ENCODE measurements at regions of chr11 and their contacts with region 1.

Region 1: DNA sequence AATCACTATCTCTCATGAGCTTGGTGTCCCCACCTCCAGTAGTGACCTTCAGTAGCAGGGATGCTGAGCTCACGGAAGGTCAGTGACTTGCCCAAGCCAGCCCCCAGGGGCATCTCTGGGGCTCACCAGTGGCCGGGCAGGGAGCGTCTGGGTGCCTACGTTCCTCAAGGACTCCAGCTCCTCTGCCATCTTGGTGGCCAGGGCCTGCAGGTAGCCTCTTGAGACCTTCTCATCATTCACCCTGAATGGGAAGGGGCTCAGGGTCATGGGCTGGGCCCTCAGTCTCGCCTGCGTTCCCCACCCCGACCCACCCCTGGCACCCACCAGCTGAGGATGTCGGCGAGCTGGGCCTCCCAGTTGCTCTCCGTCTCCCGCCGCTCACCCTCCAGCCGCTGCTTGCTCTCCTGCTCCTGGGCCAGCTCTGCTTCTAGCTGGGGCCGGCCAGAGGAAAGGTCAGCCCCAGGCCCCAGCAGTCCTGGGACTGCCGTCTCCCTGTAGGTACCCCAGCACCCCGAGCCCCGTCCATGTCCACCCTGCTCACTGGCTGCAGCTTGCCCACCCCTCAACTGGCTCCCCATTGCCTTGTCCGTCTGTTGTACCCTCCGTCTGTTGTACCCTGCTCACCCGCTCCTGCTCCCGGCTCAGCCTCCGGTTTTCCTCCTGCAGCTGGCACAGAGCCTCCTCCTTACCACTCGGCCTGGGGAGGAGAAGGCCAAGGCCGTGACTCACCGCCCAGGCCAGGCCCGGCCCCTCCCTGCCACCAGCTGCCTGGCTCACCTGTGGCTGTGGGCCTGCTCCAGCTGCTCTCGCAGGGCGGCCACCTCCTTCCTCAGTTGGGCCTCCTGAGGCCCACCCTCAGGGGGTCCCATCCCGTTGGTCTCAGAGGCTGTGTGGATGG is 9.5 kb downstream of the CDC42BPG start:
- DNase-seq: peak; percentile 85
- H3K4me3 ChIP-seq: no peak overlapping the region
- H3K27ac ChIP-seq: no peak overlapping the region
- H3K4me1 ChIP-seq: peaks cover 19% of the 10 kb centered on the region
- H3K27me3 ChIP-seq: no peaks in the 10 kb centered on the region
- CTCF ChIP-seq: no peak

Region 2: GRCh38 chr11:64652586-64653387 is 182.2 kb before region 1 on chr11:
- CTCF ChIA-PET with region 1: no interaction called
- dilution Hi-C with region 1: no loop called
- in situ Hi-C with region 1: no loop called
- intact Hi-C with region 1: no loop called
- DNase-seq: peak; percentile 41
- H3K4me3 ChIP-seq: no peak overlapping the region
- H3K27ac ChIP-seq: no peak overlapping the region
- H3K4me1 ChIP-seq: no peaks in the 10 kb centered on the region
- H3K27me3 ChIP-seq: no peaks in the 10 kb centered on the region
- CTCF ChIP-seq: peak; percentile 91 to 93

Region 3: DNA sequence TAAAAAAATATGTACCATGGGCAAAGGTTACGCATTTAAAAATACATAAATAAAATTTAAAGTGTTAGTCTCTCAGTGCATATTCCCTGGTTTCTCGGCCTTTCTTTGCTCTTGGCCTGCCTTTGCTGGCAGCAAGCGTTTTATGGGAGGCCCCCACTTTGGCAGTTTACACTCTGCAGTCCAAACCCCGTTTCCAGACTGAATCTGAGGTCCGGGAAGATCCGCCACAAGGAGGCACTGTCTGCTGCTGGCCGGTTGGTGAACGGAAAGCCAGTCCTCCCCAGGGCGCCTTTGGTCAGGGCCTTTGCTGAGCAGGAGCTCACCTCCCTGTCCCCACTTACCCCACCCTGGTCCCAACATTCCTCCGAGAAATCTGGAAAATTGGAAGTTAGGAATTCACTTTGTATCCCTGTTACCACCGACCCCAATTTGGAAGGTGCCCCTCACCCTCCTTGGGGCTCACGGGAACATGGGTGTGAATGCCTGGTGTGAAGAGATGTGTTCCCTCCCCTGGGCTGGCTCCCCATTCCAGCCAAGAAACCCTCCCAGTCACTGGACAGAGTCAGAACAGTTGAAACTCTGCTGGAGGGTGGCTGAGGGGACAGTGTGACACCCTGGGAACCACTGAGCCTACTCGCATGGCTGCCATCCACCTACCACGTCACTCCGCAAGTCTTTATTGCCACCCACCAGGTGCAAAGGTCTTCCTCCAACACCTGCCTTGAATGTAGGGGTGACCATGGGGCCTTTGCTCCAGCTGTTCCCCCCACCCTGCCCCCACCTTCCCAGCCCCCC is 47.2 kb before region 1 on chr11:
- CTCF ChIA-PET with region 1: interaction called, 22 read pairs
- dilution Hi-C with region 1: no loop called
- in situ Hi-C with region 1: no loop called
- intact Hi-C with region 1: no loop called
- DNase-seq: peak; percentile 25
- H3K4me3 ChIP-seq: no peak overlapping the region
- H3K27ac ChIP-seq: no peak overlapping the region
- H3K4me1 ChIP-seq: no peaks in the 10 kb centered on the region
- H3K27me3 ChIP-seq: no peaks in the 10 kb centered on the region
- CTCF ChIP-seq: peak; percentile 81 to 92